B cell (primary cell): ENCODE measurements at regions of chr19 and their contacts with region 1.

Region 1: DNA sequence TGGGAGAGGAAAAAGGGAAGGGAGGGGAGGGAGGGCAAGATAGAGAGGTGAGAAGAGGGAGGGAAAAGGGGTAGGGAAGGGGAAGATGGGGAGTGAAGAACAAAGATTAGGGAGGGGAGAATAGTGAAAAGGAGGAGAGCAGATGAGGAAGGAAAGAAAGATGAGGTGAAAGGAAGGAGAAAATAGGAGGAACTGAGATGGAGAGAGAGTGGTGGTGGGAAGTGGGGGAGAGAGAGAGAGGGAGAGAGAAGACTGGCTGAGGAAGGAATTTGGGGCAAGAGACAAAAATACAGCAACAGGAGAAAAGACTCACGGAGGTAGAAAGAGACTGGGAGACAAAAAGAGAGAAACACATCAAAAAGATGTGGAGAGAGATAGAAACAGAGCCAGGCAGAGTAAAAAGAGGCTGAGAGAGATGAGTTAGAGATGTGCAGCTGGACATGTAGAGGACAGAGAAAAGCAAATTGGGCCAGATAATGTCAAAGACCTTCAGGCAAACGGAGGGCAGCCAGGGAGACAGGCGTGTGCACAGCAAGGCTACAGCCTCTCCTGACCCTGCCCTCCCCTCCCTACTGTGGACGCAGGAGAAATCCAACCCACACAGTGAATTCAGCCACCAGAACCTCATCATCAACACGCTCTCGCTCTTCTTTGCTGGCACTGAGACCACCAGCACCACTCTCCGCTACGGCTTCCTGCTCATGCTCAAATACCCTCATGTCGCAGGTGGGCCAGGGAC is 49.4 kb upstream of the CYP2B6 start:
- DNase-seq: no peak
- ATAC-seq: no peak
- H3K4me3 ChIP-seq: no peak overlapping the region
- H3K4me3 Mint-ChIP-seq: no peak overlapping the region
- H3K27ac ChIP-seq: no peak overlapping the region
- H3K27ac Mint-ChIP-seq: no peak overlapping the region
- H3K4me1 ChIP-seq: no peaks in the 10 kb centered on the region
- H3K4me1 Mint-ChIP-seq: no peaks in the 10 kb centered on the region
- H3K27me3 ChIP-seq: peaks cover 0 to 12% (median 0%) of the 10 kb centered on the region in 4 experiments
- H3K27me3 Mint-ChIP-seq: peaks cover 37% of the 10 kb centered on the region
- CTCF ChIP-seq: no peak

Region 2: GRCh38 chr19:40897962-40898361 is 43.7 kb before region 1 on chr19:
- CTCF ChIA-PET with region 1: no interaction called
- POLR2A ChIA-PET with region 1: no interaction called
- intact Hi-C with region 1: no loop called
- DNase-seq: no peak
- ATAC-seq: no peak
- H3K4me3 ChIP-seq: no peak overlapping the region
- H3K4me3 Mint-ChIP-seq: no peak overlapping the region
- H3K27ac ChIP-seq: no peak overlapping the region
- H3K27ac Mint-ChIP-seq: no peak overlapping the region
- H3K4me1 ChIP-seq: peaks cover 0 to 8% of the 10 kb centered on the region in 2 donors
- H3K4me1 Mint-ChIP-seq: no peaks in the 10 kb centered on the region
- H3K27me3 ChIP-seq: peaks cover 0 to 7% (median 2%) of the 10 kb centered on the region in 4 experiments
- H3K27me3 Mint-ChIP-seq: peaks cover 59% of the 10 kb centered on the region
- CTCF ChIP-seq: no peak

Region 3: GRCh38 chr19:41001248-41001971 is 59.8 kb after region 1 on chr19:
- CTCF ChIA-PET with region 1: no interaction called
- POLR2A ChIA-PET with region 1: no interaction called
- intact Hi-C with region 1: loop called (anchors 2 kb)
- DNase-seq: no peak
- ATAC-seq: no peak
- H3K4me3 ChIP-seq: no peak overlapping the region
- H3K4me3 Mint-ChIP-seq: no peak overlapping the region
- H3K27ac ChIP-seq: no peak overlapping the region
- H3K27ac Mint-ChIP-seq: no peak overlapping the region
- H3K4me1 ChIP-seq: no peaks in the 10 kb centered on the region
- H3K4me1 Mint-ChIP-seq: no peaks in the 10 kb centered on the region
- H3K27me3 ChIP-seq: peaks cover 0 to 6% (median 0%) of the 10 kb centered on the region in 4 experiments
- H3K27me3 Mint-ChIP-seq: peaks cover 38% of the 10 kb centered on the region
- CTCF ChIP-seq: no peak

Region 4: GRCh38 chr19:41016488-41017071 is 74.9 kb after region 1 on chr19:
- CTCF ChIA-PET with region 1: no interaction called
- POLR2A ChIA-PET with region 1: no interaction called
- intact Hi-C with region 1: no loop called
- DNase-seq: no peak
- ATAC-seq: no peak
- H3K4me3 ChIP-seq: no peak overlapping the region
- H3K4me3 Mint-ChIP-seq: no peak overlapping the region
- H3K27ac ChIP-seq: no peak overlapping the region
- H3K27ac Mint-ChIP-seq: no peak overlapping the region
- H3K4me1 ChIP-seq: no peaks in the 10 kb centered on the region
- H3K4me1 Mint-ChIP-seq: no peaks in the 10 kb centered on the region
- H3K27me3 ChIP-seq: peaks cover 0 to 21% (median 6%) of the 10 kb centered on the region in 4 experiments
- H3K27me3 Mint-ChIP-seq: peaks cover 38% of the 10 kb centered on the region
- CTCF ChIP-seq: no peak

Region 5: GRCh38 chr19:41449079-41449864 is 507.6 kb after region 1 on chr19:
- CTCF ChIA-PET with region 1: no interaction called
- POLR2A ChIA-PET with region 1: no interaction called
- intact Hi-C with region 1: no loop called
- DNase-seq: peak; percentile 82
- ATAC-seq: peak; percentile 97
- H3K4me3 ChIP-seq: peak overlapping the region in 3 of 5 experiments; percentile 31 to 48 (median 35)
- H3K4me3 Mint-ChIP-seq: peak overlapping the region; percentile 74
- H3K27ac ChIP-seq: no peak overlapping the region
- H3K27ac Mint-ChIP-seq: peak overlapping the region; percentile 44
- H3K4me1 ChIP-seq: peaks cover 12 to 20% of the 10 kb centered on the region in 2 donors
- H3K4me1 Mint-ChIP-seq: peaks cover 20% of the 10 kb centered on the region
- H3K27me3 ChIP-seq: peaks cover 0 to 1% (median 0%) of the 10 kb centered on the region in 4 experiments
- H3K27me3 Mint-ChIP-seq: peaks cover 5% of the 10 kb centered on the region
- CTCF ChIP-seq: peak; percentile 99